H1 (cell line): ENCODE measurements at regions of chr6 and their contacts with region 1.

Region 1: DNA sequence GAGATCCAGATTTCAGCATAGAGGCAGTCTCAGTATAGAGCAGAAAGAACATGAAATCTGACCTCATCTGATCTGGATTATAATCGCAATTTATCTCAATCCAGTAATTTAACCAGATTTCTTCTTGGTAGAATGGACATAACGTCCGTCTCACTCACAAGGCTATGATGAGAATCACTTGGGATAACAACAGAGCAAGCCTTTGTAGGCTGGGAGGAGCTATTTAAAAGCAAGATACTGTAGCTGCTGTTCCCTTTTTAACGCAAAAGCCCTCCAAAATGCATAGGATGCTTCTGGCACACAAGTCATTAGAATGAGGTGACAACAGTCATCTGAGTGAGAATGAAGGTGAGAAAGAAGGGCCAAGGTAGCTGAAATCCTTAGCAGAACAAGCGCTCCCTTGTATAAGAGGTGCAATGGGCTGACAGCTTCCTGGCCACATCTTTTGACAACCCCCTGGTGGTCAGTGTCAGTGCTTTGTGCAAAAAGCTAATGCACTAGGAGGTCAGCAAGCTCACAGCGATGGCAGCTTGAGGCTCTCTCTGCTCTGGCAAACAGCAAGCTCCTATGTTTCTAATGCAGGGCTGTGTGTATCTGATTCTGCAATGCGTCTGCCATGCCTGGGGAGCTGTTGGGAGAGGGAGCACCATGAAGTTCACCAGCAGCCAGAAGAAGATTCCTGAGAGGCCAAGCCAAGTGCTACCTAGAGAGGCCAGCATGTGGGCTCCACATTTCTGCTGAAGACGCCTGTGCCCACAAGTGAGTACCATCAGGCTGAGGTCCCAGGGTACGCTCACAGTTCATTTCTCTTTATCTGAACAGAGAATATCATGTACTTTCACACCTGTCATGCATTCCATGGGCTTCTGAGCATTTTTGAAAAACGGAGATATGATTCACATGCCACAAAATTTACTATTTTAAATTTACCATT is 16.2 kb downstream of the METTL24 start:
- DNase-seq: peak in 1 of 2 experiments; percentile 57
- H3K4me3 ChIP-seq: no peak overlapping the region
- H3K27ac ChIP-seq: no peak overlapping the region
- H3K4me1 ChIP-seq: no peaks in the 10 kb centered on the region; a peak in 1 of 7 replicates
- H3K27me3 ChIP-seq: peaks cover 0 to 1% (median 0%) of the 10 kb centered on the region in 4 experiments; a peak in 1 of 7 replicates
- CTCF ChIP-seq: peak; percentile 46 to 86 (median 56)
- EP300 ChIP-seq: no peak
- POLR2A ChIP-seq: no peak
- RAD21 ChIP-seq: peak; percentile 64 to 69

Region 2: DNA sequence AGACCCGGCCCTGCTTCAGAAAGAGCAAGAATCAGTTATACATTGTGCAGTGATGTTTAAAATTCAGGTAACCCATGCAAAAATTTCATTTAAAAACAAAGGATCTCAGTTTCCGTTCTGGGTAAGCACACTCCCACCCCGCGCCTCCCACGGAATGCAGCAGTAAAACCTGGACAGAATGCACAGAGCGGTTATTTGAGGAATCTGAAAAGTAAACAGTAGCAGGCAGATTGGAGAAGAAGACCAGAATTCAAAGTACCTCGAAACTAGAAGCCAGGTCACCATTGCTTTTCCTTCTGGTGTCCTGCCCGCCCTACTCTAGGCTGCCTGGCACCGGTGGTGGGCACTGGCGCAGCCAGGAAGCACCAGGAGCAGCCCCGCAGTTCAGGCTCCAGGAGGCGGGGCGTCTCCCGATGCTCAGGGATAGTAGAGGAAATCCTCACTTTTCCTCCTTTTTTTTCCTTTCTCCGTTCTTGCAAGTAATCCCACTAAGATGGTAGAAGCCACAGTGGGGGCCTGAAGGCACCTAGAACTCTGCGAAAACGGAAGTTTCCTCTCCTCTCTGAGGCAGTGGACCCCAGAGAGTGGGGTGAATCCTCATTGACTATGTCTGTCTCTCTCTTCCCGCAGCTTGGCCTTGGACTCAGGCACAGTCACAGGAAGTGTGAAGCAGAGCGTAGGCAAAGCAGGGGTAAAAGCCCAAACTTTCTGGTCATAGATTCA is 12.1 kb before region 1 on chr6:
- CTCF ChIA-PET with region 1: interaction called, 14 read pairs
- POLR2A ChIA-PET with region 1: no interaction called
- DNase-seq: no peak
- H3K4me3 ChIP-seq: no peak overlapping the region
- H3K27ac ChIP-seq: no peak overlapping the region
- H3K4me1 ChIP-seq: peaks cover 0 to 3% (median 0%) of the 10 kb centered on the region in 4 experiments; a peak in 1 of 7 replicates
- H3K27me3 ChIP-seq: no peaks in the 10 kb centered on the region
- CTCF ChIP-seq: no peak
- EP300 ChIP-seq: no peak
- POLR2A ChIP-seq: no peak
- RAD21 ChIP-seq: no peak

Region 3: DNA sequence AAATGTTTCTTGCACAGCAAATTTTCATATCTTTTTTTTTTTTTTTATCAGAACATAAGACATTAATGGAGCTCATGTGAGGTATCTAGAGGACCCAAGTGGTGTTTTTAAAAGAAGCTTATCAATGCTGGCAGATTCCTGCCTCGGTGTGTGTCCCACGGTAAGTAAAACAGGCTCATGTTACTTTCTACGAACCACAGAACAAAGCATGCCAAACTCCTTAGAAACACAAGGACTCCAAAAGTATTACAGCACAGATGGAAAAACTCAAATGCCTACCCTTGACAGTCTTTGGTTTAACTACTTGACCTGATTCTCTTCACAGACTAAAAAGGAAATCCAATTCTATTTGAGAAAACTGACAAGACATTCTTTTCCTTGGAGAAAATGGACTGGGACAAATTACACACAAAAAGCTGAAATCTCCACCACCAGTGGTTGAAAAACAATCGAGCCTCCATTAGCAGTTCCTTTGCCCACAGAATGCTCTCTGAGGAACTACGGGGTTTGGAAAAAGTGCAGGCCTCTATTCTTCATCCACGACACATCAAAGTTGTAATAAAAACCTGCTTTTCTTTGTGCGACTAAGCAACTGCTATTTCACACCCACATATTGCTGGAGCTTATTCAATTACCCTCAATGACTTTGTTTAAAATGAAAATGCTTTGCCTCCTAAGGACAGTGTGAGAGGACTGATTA is 10.8 kb after region 1 on chr6:
- CTCF ChIA-PET with region 1: interaction called, 18 read pairs
- POLR2A ChIA-PET with region 1: no interaction called
- DNase-seq: no peak
- H3K4me3 ChIP-seq: no peak overlapping the region
- H3K27ac ChIP-seq: no peak overlapping the region
- H3K4me1 ChIP-seq: peaks cover 13 to 26% (median 20%) of the 10 kb centered on the region in 4 experiments
- H3K27me3 ChIP-seq: peaks cover 6 to 15% (median 14%) of the 10 kb centered on the region in 4 experiments
- CTCF ChIP-seq: no peak
- EP300 ChIP-seq: no peak
- POLR2A ChIP-seq: no peak
- RAD21 ChIP-seq: no peak